Naive thymus-derived CD4-positive, alpha-beta T cell (primary cell): ENCODE measurements at regions of chr9 and their contacts with region 1.

Region 1: GRCh38 chr9:71628247-71628646 is 140.1 kb downstream of the CEMIP2 start:
- DNase-seq: peak in 1 of 9 donors; percentile 29
- ATAC-seq: peak; percentile 57
- H3K4me3 ChIP-seq: no peak overlapping the region
- H3K4me3 Mint-ChIP-seq: no peak overlapping the region
- H3K27ac ChIP-seq: no peak overlapping the region
- H3K27ac Mint-ChIP-seq: no peak overlapping the region
- H3K4me1 ChIP-seq: no peaks in the 10 kb centered on the region
- H3K4me1 Mint-ChIP-seq: peaks cover 0 to 33% (median 0%) of the 10 kb centered on the region in 7 donors
- H3K27me3 ChIP-seq: no peaks in the 10 kb centered on the region
- H3K27me3 Mint-ChIP-seq: peaks cover 0 to 27% (median 0%) of the 10 kb centered on the region in 5 donors

Region 2: DNA sequence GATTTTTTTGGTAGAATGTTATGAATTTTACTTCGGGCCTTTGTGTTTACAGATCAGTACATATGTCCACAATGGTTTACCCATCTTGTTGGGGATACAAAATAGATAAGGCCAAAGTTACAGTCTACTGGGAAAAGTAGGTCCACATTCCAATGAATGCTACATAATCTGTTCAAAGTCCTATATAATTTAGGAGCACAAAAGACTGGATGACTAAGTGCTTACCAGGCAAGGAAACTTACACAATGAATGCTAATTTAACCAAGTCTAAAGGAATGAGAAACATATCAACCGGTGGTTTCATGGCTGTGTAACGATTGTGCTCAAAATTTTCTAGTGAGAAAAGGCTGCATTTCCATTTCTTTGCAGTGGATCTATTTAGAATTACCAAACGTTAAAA is 409.5 kb before region 1 on chr9:
- CTCF ChIA-PET with region 1: no interaction called
- POLR2A ChIA-PET with region 1: no interaction called
- intact Hi-C with region 1: no loop called
- DNase-seq: no peak
- ATAC-seq: no peak
- H3K4me3 ChIP-seq: no peak overlapping the region
- H3K4me3 Mint-ChIP-seq: no peak overlapping the region
- H3K27ac ChIP-seq: no peak overlapping the region
- H3K27ac Mint-ChIP-seq: no peak overlapping the region
- H3K4me1 ChIP-seq: no peaks in the 10 kb centered on the region
- H3K4me1 Mint-ChIP-seq: no peaks in the 10 kb centered on the region
- H3K27me3 ChIP-seq: no peaks in the 10 kb centered on the region
- H3K27me3 Mint-ChIP-seq: peaks cover 0 to 9% (median 0%) of the 10 kb centered on the region in 5 donors

Region 3: DNA sequence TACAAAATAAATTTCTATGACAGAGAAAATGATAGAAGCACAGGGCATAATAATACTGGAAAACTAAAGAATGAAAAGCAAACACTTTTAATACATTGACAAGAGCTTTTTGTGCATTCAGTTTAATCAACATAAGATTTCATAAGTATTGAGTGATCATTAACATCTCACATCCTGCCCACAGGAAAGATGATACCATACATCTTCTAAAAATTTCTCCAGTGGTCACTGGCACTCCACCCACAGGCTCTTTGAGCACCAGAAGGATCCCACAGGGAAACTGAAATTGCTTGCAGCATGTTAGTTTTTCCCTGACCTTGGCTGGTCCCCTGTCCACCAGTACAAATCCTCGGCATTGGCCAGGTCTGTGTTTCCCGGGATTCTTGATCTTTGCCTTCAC is 45.9 kb before region 1 on chr9:
- CTCF ChIA-PET with region 1: no interaction called
- POLR2A ChIA-PET with region 1: no interaction called
- intact Hi-C with region 1: no loop called
- DNase-seq: no peak
- ATAC-seq: no peak
- H3K4me3 ChIP-seq: no peak overlapping the region
- H3K4me3 Mint-ChIP-seq: no peak overlapping the region
- H3K27ac ChIP-seq: no peak overlapping the region
- H3K27ac Mint-ChIP-seq: no peak overlapping the region
- H3K4me1 ChIP-seq: no peaks in the 10 kb centered on the region
- H3K4me1 Mint-ChIP-seq: no peaks in the 10 kb centered on the region
- H3K27me3 ChIP-seq: no peaks in the 10 kb centered on the region
- H3K27me3 Mint-ChIP-seq: peaks cover 0 to 11% (median 4%) of the 10 kb centered on the region in 5 donors

Region 4: GRCh38 chr9:71663931-71664459 is 35.7 kb after region 1 on chr9:
- CTCF ChIA-PET with region 1: no interaction called
- POLR2A ChIA-PET with region 1: no interaction called
- intact Hi-C with region 1: loop called in 1 of 2 experiments (anchors 5 kb)
- DNase-seq: no peak
- ATAC-seq: no peak
- H3K4me3 ChIP-seq: no peak overlapping the region
- H3K4me3 Mint-ChIP-seq: peak overlapping the region in 1 of 10 donors; percentile 15
- H3K27ac ChIP-seq: no peak overlapping the region
- H3K27ac Mint-ChIP-seq: no peak overlapping the region
- H3K4me1 ChIP-seq: no peaks in the 10 kb centered on the region
- H3K4me1 Mint-ChIP-seq: peaks cover 0 to 18% (median 0%) of the 10 kb centered on the region in 7 donors
- H3K27me3 ChIP-seq: no peaks in the 10 kb centered on the region
- H3K27me3 Mint-ChIP-seq: peaks cover 0 to 16% (median 0%) of the 10 kb centered on the region in 5 donors

Region 5: GRCh38 chr9:71703172-71703872 is 75.1 kb after region 1 on chr9:
- CTCF ChIA-PET with region 1: no interaction called
- POLR2A ChIA-PET with region 1: no interaction called
- intact Hi-C with region 1: loop called in 1 of 2 experiments (anchors 5 kb)
- DNase-seq: no peak
- ATAC-seq: no peak
- H3K4me3 ChIP-seq: no peak overlapping the region
- H3K4me3 Mint-ChIP-seq: no peak overlapping the region
- H3K27ac ChIP-seq: no peak overlapping the region
- H3K27ac Mint-ChIP-seq: peak overlapping the region in 6 of 9 donors; percentile 0 to 68 (median 30)
- H3K4me1 ChIP-seq: no peaks in the 10 kb centered on the region
- H3K4me1 Mint-ChIP-seq: peaks cover 4 to 29% (median 12%) of the 10 kb centered on the region in 7 donors
- H3K27me3 ChIP-seq: no peaks in the 10 kb centered on the region
- H3K27me3 Mint-ChIP-seq: no peaks in the 10 kb centered on the region

Region 6: GRCh38 chr9:71716138-71716909 is 88.1 kb after region 1 on chr9:
- CTCF ChIA-PET with region 1: no interaction called
- POLR2A ChIA-PET with region 1: no interaction called
- intact Hi-C with region 1: loop called (anchors 2 kb)
- DNase-seq: peak in 1 of 9 donors; percentile 10
- ATAC-seq: no peak
- H3K4me3 ChIP-seq: no peak overlapping the region
- H3K4me3 Mint-ChIP-seq: no peak overlapping the region
- H3K27ac ChIP-seq: no peak overlapping the region
- H3K27ac Mint-ChIP-seq: no peak overlapping the region
- H3K4me1 ChIP-seq: no peaks in the 10 kb centered on the region
- H3K4me1 Mint-ChIP-seq: peaks cover 9 to 19% (median 16%) of the 10 kb centered on the region in 7 donors
- H3K27me3 ChIP-seq: no peaks in the 10 kb centered on the region
- H3K27me3 Mint-ChIP-seq: no peaks in the 10 kb centered on the region